Ascending aorta (tissue), 2 donors: ENCODE measurements at regions of chr2 and their contacts with region 1.

Region 1: GRCh38 chr2:236642584-236643291 is 73.1 kb downstream of the ACKR3 start:
- DNase-seq: peak; percentile 93 to 99
- H3K4me3 ChIP-seq: peak overlapping the region in 1 of 2 donors; percentile 28
- H3K27ac ChIP-seq: peak overlapping the region; percentile 79 to 85
- H3K4me1 ChIP-seq: peaks cover 10 to 32% of the 10 kb centered on the region in 2 donors
- H3K27me3 ChIP-seq: no peaks in the 10 kb centered on the region
- CTCF ChIP-seq: no peak

Region 2: GRCh38 chr2:236597629-236598028 is 45.1 kb before region 1 on chr2:
- intact Hi-C with region 1: loop called (anchors 1 kb)
- DNase-seq: no peak
- H3K4me3 ChIP-seq: peak overlapping the region in 1 of 2 donors; percentile 19
- H3K27ac ChIP-seq: peak overlapping the region; percentile 41 to 62
- H3K4me1 ChIP-seq: peaks cover 0 to 6% of the 10 kb centered on the region in 2 donors
- H3K27me3 ChIP-seq: no peaks in the 10 kb centered on the region
- CTCF ChIP-seq: no peak

Region 3: DNA sequence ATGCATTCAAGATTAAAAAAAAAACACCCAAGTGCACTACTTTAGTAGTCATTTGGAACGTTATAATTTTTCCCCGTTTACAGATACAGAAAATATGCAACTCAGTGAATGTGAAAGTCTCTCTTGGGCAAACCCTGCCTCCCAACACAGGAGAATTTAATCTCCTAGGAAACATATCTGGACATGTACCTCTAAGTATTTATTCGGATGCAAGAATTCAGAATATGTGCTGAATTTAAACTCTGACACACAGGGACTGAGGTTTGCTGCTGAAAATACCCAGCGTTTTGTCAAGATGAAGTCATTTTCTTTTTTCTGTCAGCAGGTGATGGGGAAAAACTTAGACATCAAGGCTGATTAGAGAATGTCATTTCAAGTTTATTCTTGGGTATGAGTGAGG is 32.3 kb after region 1 on chr2:
- intact Hi-C with region 1: loop called (anchors 1 kb)
- DNase-seq: peak in 1 of 2 donors; percentile 65
- H3K4me3 ChIP-seq: peak overlapping the region in 1 of 2 donors; percentile 8
- H3K27ac ChIP-seq: peak overlapping the region; percentile 61 to 62
- H3K4me1 ChIP-seq: peaks cover 0 to 23% of the 10 kb centered on the region in 2 donors
- H3K27me3 ChIP-seq: no peaks in the 10 kb centered on the region
- CTCF ChIP-seq: no peak

Region 4: GRCh38 chr2:236745420-236746197 is 102.9 kb after region 1 on chr2:
- intact Hi-C with region 1: loop called (anchors 5 kb)
- DNase-seq: peak in 1 of 2 donors; percentile 87
- H3K4me3 ChIP-seq: no peak overlapping the region
- H3K27ac ChIP-seq: peak overlapping the region; percentile 58 to 65
- H3K4me1 ChIP-seq: peaks cover 0 to 11% of the 10 kb centered on the region in 2 donors
- H3K27me3 ChIP-seq: no peaks in the 10 kb centered on the region
- CTCF ChIP-seq: no peak

Region 5: DNA sequence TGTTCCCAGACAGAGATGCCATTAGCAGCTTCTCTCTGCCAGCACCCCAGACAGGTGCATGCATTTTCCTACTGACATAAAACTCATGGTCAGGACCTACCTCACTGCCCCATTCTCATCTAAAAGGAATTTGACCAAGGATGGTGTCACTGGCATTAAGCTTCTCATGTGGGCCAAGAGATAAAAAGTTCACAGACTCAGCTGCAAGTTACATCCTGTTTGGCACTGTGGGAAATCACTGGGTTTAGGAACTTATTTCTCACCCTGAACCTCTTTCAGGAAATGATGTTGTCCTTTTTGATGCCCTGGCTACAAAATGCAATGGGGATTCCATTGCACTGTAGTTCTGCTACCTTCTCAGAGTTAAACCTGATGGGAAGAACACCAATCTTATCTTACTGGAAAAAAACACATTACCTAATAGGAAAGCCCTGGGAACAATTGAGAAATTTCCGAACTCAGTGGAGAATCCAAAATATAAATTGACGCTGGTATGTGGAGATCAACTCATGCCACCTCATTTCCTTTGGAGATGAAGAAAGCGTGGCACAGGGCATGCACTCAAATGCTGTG is 190.8 kb after region 1 on chr2:
- intact Hi-C with region 1: loop called (anchors 5 kb)
- DNase-seq: no peak
- H3K4me3 ChIP-seq: no peak overlapping the region
- H3K27ac ChIP-seq: no peak overlapping the region
- H3K4me1 ChIP-seq: peaks cover 3 to 15% of the 10 kb centered on the region in 2 donors
- H3K27me3 ChIP-seq: no peaks in the 10 kb centered on the region
- CTCF ChIP-seq: no peak